ENCODE measurements at regions of chr12 and their contacts with region 1.

Region 1: GRCh38 chr12:121499929-121500793 is 80.7 kb downstream of the KDM2B start:
- DNase-seq: peak; percentile 82
- H3K4me3 ChIP-seq: no peak overlapping the region
- H3K27ac ChIP-seq: peak overlapping the region; percentile 1 to 76 (median 35)
- H3K4me1 ChIP-seq: peaks cover 0 to 4% (median 3%) of the 10 kb centered on the region in 4 donors
- H3K27me3 ChIP-seq: no peaks in the 10 kb centered on the region
- CTCF ChIP-seq: peak; percentile 83 to 99 (median 98)
- EP300 ChIP-seq: no peak
- POLR2A ChIP-seq: no peak

Region 2: DNA sequence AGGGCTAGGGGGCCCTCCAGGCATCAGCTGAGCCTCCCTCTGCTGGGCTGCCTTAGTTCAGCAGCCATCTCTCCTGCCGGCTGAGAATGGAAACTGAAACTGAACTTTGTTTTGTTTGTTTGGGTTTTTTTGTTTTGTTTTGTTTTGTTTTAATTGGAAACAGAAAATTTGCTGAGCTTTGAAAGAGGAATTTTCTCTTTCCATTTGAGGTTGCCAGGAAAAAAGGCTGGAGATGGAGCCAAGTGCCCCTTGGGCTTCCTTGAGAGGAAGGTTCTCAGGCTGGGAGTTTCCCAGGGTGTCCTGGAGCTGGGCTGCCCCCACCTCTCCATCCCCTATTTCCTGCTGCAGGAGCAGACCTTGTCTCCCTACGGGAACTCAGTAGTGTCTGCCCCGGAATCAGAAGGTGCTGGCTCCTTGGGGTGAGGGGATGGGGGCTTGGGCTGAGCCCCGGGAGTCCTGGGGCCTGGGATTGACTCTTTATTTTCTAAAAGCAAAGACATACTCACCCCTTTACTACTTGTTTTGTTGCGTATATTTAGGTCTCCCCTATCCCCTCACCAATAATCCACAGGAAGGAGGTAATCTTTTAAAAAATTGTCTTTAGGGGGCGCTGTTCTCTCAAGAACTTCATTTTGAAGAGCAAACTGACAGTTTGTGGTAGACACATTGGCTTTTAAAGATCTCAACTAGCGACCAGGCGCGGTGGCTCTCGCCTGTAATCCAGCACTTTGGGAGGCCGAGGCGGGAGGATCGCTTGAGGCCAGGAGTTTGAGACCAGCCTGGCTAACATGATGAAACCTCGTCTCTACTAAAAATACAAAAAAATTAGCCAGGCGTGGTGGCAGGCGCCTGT is 439.8 kb before region 1 on chr12:
- in situ Hi-C with region 1: no loop called
- intact Hi-C with region 1: no loop called
- DNase-seq: peak; percentile 45
- H3K4me3 ChIP-seq: peak overlapping the region in 2 of 4 donors; percentile 27 to 43
- H3K27ac ChIP-seq: peak overlapping the region; percentile 47 to 75 (median 66)
- H3K4me1 ChIP-seq: peaks cover 0 to 10% (median 4%) of the 10 kb centered on the region in 4 donors
- H3K27me3 ChIP-seq: no peaks in the 10 kb centered on the region
- CTCF ChIP-seq: peak; percentile 26 to 69 (median 45)
- EP300 ChIP-seq: no peak
- POLR2A ChIP-seq: no peak

Region 3: DNA sequence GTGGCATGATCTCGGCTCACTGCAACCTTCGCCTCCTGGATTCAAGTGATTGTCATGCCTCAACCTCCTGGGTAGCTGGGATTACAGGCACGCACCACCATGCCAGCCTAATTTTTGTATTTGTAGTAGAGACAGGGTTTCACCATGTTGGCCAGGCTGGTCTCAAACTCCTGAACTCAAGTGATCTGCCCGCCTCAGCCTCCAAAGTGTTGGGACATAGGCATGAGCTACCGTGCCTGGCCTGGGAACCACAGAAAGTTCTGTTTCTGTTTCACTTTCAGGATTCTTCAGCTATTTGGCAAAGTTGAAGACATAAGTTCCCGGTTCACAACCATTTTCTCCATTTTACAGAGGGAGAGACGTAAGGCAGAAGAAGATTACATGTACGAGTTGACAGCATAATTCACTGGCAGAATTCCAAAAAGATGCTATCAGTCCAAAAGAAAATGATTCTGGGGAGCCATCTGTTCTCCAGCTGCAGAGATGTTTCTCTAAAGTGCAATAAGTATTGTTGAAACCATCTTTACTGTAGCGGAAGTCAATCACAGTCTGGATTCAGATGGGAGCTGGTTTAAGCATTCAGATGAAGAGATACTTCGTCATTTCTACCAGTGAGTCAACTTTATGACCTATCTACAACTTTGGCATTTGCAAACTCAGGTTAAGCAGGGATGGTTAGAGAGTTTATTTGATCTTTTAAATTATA is 108.4 kb before region 1 on chr12:
- in situ Hi-C with region 1: no loop called
- intact Hi-C with region 1: no loop called
- DNase-seq: peak; percentile 38
- H3K4me3 ChIP-seq: peak overlapping the region in 1 of 4 donors; percentile 29
- H3K27ac ChIP-seq: peak overlapping the region; percentile 4 to 50 (median 19)
- H3K4me1 ChIP-seq: peaks cover 0 to 6% (median 0%) of the 10 kb centered on the region in 4 donors
- H3K27me3 ChIP-seq: no peaks in the 10 kb centered on the region
- CTCF ChIP-seq: no peak
- EP300 ChIP-seq: no peak
- POLR2A ChIP-seq: no peak

Region 4: DNA sequence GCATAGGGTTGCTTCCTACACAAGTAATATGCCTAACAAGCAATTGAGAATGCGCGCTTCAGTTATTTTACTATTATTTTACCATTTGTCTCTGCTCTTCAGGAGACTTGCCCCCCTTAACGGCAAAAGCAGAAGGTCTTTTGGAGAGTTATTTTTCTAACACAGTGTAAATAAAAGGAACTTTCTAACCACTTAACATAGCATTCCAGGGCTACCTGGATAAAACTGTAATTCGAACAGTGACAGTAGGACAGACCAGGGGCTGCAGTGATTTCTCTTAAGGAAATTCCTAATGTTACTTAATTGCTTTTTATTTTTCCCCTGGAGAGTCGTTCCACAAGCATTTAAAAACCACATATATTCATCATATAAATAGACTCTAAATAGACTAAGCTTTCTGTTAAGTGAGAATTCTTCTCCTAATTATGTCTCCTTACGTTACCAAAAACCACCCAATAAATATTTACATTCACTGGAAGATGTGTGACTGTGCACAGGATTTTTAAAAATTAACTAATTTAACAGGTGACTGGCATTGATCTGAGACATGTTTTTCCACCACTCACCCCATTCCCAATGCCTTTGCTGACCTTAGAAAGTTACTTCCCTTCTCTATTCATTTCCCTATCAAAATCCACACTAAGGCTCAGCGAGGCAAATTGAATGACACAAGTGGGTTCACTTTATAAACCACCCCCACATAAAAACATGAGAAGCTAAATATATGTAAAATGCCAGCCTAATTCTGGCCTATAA is 27.8 kb before region 1 on chr12:
- in situ Hi-C with region 1: no loop called
- intact Hi-C with region 1: no loop called
- DNase-seq: no peak
- H3K4me3 ChIP-seq: no peak overlapping the region
- H3K27ac ChIP-seq: no peak overlapping the region
- H3K4me1 ChIP-seq: peaks cover 0 to 10% (median 8%) of the 10 kb centered on the region in 4 donors
- H3K27me3 ChIP-seq: no peaks in the 10 kb centered on the region
- CTCF ChIP-seq: no peak
- EP300 ChIP-seq: no peak
- POLR2A ChIP-seq: no peak

Region 5: DNA sequence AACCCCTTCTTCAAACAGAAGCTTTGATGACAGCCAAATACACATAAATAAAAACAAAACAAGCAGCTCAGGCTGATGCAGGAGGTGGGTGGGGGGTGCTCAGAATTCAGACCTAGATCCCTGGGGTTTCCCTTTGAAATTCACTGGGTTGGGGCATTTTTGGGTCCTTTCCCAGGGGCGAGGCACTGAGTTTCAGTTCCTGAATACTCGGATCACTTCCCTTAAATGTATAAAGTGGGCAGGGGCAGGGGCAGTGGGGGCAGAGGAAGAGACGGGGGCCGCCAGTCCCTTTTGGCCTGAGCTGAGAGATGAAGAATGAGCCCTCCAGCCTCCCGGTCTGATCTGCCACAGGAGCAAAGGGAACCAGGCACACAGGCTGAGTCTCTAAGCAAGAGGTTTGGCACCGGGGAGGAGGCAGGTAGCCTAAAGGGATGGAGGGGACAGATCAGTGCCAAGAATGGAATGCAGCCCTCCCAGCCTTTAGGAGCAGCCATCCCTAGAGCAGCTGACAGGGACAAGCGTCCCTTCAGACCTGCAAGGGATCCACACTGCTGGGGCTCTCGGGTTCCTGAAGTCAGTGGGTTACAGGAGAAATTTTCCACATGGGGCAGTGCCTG is 60.3 kb after region 1 on chr12:
- in situ Hi-C with region 1: no loop called
- intact Hi-C with region 1: no loop called
- DNase-seq: peak; percentile 17
- H3K4me3 ChIP-seq: no peak overlapping the region
- H3K27ac ChIP-seq: no peak overlapping the region
- H3K4me1 ChIP-seq: peaks cover 0 to 6% (median 0%) of the 10 kb centered on the region in 4 donors
- H3K27me3 ChIP-seq: no peaks in the 10 kb centered on the region
- CTCF ChIP-seq: no peak
- EP300 ChIP-seq: no peak
- POLR2A ChIP-seq: no peak

Region 6: GRCh38 chr12:121673003-121673511 is 172.9 kb after region 1 on chr12:
- in situ Hi-C with region 1: loop called in 2 of 4 experiments (anchors 5 to 10 kb)
- intact Hi-C with region 1: loop called (anchors 5 kb)
- DNase-seq: peak; percentile 51
- H3K4me3 ChIP-seq: peak overlapping the region in 3 of 4 donors; percentile 29 to 50 (median 32)
- H3K27ac ChIP-seq: peak overlapping the region; percentile 51 to 70 (median 61)
- H3K4me1 ChIP-seq: peaks cover 8 to 19% (median 14%) of the 10 kb centered on the region in 4 donors
- H3K27me3 ChIP-seq: no peaks in the 10 kb centered on the region
- CTCF ChIP-seq: no peak
- EP300 ChIP-seq: no peak
- POLR2A ChIP-seq: no peak

Region 7: DNA sequence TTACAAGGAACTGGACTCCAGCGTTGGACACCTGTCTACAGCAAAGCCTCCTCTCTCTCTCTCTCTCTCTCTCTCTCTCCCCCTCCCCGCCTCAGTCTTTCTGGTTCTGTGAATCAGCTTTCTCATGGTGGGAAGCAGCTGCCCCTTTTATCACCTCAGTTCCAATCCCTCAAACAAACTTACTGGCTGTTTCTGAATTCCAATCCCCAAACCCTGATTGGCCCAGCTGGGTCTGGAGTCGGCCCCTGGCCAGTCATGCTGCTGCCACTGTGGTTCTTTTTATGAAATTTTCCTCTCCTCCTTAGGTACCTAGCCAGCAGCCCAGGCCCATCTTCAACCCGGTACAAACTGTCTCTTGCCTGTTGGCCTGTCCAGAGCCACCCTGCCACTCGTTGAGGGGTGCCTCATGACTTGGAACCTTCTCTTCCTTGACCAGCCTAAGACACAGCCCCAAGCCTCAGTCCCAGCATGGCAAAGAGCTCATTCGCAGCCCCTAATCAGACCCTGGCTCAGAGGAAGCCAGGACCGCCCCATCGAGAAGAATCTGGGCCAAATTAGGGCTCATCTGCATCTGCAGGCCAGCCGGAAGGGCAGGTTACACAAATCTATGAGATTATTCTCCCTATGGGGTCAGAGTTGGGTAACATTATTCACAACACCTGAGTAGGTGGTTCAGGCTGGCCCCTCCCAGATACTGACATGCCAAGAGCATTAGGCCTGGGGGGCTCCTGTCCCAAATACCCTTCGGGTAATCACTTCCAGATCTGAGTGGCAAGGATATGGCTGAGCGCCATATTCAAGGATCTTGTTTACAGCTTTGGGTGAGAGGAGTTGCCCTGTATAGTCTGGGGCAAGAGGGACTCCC is 178.8 kb after region 1 on chr12:
- in situ Hi-C with region 1: loop called in 3 of 4 experiments (anchors 5 to 10 kb)
- intact Hi-C with region 1: loop called (anchors 5 kb)
- DNase-seq: no peak
- H3K4me3 ChIP-seq: no peak overlapping the region
- H3K27ac ChIP-seq: no peak overlapping the region
- H3K4me1 ChIP-seq: peaks cover 0 to 6% (median 0%) of the 10 kb centered on the region in 4 donors
- H3K27me3 ChIP-seq: no peaks in the 10 kb centered on the region
- CTCF ChIP-seq: no peak
- EP300 ChIP-seq: no peak
- POLR2A ChIP-seq: no peak

Region 8: GRCh38 chr12:121688966-121689365 is 188.8 kb after region 1 on chr12:
- in situ Hi-C with region 1: loop called in 1 of 4 experiments (anchors 10 kb)
- intact Hi-C with region 1: no loop called
- DNase-seq: no peak
- H3K4me3 ChIP-seq: no peak overlapping the region
- H3K27ac ChIP-seq: no peak overlapping the region
- H3K4me1 ChIP-seq: peaks cover 0 to 14% (median 8%) of the 10 kb centered on the region in 4 donors
- H3K27me3 ChIP-seq: no peaks in the 10 kb centered on the region
- CTCF ChIP-seq: no peak
- EP300 ChIP-seq: no peak
- POLR2A ChIP-seq: no peak

Measured in transverse colon (tissue), 4 donors.